PC-9 (cell line): ENCODE measurements at regions of chr2 and their contacts with region 1.

Region 1: DNA sequence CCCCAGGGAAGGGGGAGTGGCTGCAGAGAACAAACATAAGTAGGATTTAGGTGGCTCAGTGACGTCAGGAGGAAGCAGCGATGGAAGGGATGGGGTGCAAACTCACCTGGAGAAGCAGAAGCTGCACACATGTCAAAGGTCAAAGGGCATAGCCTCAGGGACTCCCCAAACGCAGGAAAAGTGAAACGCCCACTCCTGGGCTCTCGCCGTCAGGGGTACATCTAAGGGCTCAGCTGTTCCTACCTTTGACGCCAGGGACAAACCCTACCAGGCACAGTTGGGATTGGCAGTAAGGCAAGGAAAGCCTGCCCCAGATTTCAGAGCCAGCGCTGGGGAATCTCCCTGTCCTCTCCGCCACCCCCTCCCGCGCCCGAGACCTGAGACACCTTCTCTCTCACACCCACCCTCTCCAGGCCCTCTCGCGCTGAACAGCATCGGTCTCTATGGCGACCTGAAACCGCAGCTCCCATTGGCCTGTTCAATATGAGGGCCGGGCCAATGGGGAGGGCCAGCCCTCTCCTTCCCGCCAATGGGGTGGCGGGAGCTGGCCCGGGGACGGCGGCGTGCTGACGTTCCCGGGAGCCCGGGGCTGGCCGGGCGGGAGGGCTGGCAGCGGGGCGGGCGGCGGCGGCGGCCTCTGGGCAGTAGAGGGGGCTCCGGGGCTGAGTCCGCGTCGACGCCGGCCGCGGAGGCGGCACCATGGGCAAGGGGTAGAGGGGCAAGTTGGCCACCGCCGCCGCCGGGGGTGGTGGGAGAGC is at the starts of genes CCDC148 and PKP4:
- DNase-seq: peak; percentile 78 to 87
- H3K4me3 ChIP-seq: peak within 1 kb of the TSS; percentile 89
- H3K27ac ChIP-seq: peak within 1 kb of the TSS; percentile 54
- H3K4me1 ChIP-seq: peaks cover 29% of the 10 kb centered on the region
- H3K27me3 ChIP-seq: no peaks in the 10 kb centered on the region
- CTCF ChIP-seq: no peak
- total RNA-seq, gene CCDC148: 1.8 and 2.3 TPM in 2 replicates
- total RNA-seq, gene PKP4: 55.5 and 59.1 TPM in 2 replicates

Region 2: GRCh38 chr2:158024288-158024898 is 432.1 kb before region 1 on chr2:
- CTCF ChIA-PET with region 1: no interaction called
- POLR2A ChIA-PET with region 1: no interaction called
- intact Hi-C with region 1: loop called (anchors 10 kb)
- DNase-seq: peak in 1 of 2 experiments; percentile 50
- H3K4me3 ChIP-seq: no peak overlapping the region
- H3K27ac ChIP-seq: no peak overlapping the region
- H3K4me1 ChIP-seq: no peaks in the 10 kb centered on the region
- H3K27me3 ChIP-seq: no peaks in the 10 kb centered on the region
- CTCF ChIP-seq: peak; percentile 77

Region 3: DNA sequence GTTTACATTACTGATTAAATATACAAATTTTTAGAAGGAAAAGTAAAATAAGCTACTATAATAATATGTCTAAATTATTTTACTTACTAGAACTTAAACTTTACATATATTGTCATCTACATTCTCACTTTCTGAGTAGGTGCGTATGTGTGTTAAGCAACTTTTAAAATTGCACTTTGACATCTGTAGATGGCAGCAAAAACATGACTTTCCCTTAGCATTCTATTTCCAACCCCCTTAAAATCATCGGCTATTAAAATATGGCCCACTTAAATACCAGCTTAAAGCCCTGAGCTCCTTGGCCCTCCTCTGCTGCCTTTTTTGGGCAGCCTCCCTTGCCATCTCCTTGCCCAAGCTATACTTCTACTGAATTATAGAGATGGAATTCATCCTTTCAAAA is 276.8 kb before region 1 on chr2:
- CTCF ChIA-PET with region 1: interaction called, 3 read pairs
- POLR2A ChIA-PET with region 1: no interaction called
- intact Hi-C with region 1: loop called (anchors 5 kb)
- DNase-seq: no peak
- H3K4me3 ChIP-seq: no peak overlapping the region
- H3K27ac ChIP-seq: no peak overlapping the region
- H3K4me1 ChIP-seq: peaks cover 6% of the 10 kb centered on the region; the same call in 1 of the 2 replicates
- H3K27me3 ChIP-seq: no peaks in the 10 kb centered on the region
- CTCF ChIP-seq: peak; percentile 41; the same call in 1 of the 2 replicates

Region 4: DNA sequence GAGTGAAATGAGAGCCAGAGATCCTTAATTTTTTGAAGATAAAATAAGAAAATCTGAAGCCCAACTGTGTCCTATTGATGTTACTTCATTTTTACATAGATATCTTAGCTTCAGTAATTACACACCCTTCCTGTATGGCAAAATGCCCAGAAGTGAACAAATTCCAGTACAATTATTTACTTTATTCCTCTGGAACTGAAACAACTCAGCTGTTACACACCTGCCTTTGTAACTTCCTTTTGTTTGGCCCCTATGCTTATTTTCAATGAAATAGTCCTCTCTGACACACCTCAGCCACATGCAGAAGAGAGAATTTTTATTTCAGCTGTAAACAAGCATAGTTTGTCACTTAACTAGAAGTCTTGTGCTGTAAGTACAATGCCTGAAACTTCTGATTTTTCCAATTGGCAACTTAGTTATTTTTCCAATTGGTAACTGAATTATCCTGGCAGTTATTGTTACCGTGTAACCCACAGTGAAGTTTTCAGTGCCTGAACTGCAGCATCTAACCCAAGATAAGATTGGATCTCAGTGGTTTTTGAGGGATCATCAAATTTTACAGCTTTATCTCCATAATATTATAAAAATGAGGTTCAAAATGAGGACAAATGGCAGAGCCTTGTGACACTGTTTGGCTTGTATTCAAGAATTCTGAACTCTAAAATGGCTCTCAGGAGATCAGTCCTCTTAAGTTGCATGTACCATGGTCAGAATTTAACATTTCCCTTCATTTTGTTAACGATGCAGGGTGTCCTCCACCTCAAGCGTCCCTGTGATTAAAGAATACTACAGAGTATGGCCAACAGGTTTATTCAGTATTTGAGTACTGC is 82.9 kb after region 1 on chr2:
- CTCF ChIA-PET with region 1: no interaction called
- POLR2A ChIA-PET with region 1: no interaction called
- intact Hi-C with region 1: loop called (anchors 5 kb)
- DNase-seq: peak; percentile 3 to 73
- H3K4me3 ChIP-seq: no peak overlapping the region
- H3K27ac ChIP-seq: peak overlapping the region; percentile 44; the same call in 1 of the 2 replicates
- H3K4me1 ChIP-seq: peaks cover 12% of the 10 kb centered on the region
- H3K27me3 ChIP-seq: no peaks in the 10 kb centered on the region
- CTCF ChIP-seq: no peak

Region 5: GRCh38 chr2:158554948-158555347 is 98.5 kb after region 1 on chr2:
- CTCF ChIA-PET with region 1: no interaction called
- POLR2A ChIA-PET with region 1: no interaction called
- intact Hi-C with region 1: no loop called
- DNase-seq: no peak
- H3K4me3 ChIP-seq: no peak overlapping the region
- H3K27ac ChIP-seq: no peak overlapping the region
- H3K4me1 ChIP-seq: no peaks in the 10 kb centered on the region
- H3K27me3 ChIP-seq: no peaks in the 10 kb centered on the region
- CTCF ChIP-seq: no peak

Region 6: DNA sequence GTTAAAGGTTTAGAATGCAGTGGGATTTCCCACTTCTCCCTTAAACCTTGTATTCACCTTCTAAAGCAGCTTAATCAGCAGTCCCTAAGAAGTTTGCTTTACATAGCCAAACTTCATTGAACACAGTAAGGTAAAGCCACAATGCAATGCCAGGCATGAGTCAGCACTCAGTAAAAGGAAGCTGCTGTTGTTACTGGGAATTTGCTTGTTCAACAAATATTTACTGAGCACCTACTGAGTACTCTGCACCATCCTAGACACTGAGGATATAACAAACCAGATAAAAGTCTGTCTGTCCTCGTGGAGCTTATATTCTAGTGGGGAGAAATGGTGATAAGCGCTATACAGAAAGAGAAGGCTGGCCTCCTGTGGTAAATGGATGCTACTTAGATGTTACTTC is 163.0 kb after region 1 on chr2:
- CTCF ChIA-PET with region 1: interaction called, 5 read pairs
- POLR2A ChIA-PET with region 1: no interaction called
- intact Hi-C with region 1: loop called (anchors 5 kb)
- DNase-seq: peak in 1 of 2 experiments; percentile 57
- H3K4me3 ChIP-seq: no peak overlapping the region
- H3K27ac ChIP-seq: peak overlapping the region; percentile 58
- H3K4me1 ChIP-seq: peaks cover 11% of the 10 kb centered on the region
- H3K27me3 ChIP-seq: no peaks in the 10 kb centered on the region
- CTCF ChIP-seq: no peak

Region 7: DNA sequence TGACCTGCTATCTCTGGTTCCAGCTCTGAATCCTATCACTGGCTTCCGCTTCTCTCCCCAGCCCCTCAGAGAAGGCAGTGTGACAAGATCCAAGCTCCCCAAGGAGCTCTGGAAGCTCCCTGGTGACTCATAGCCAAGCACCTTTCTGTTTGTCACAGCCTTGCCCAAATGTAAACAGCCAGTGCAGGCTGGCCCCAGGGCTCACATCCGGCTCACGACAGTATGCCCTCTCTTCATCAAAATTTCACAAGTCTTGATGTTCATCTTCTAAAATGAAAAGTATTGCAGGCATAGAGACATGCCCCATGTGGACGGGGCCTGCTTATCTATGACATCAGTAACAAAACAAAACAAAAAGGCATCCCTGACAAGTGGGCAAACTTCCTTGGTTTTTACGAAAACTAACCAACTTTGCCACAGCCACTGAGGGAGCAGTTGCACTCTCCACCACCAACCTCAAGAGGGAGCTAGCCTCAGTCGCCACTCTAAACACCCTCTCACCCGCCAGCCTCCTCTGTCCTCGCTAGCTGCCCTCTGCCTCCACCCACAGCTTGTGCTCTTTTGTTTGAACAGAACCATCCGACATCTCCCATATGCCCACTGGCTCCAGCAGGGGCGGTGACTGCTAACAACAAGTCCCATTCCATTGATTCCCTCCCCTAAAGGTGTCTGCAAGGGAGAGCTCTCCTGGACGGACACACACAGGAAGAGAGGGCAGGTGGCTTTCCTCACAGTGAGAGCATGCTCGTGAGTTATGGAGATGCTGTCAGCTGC is 267.6 kb after region 1 on chr2:
- CTCF ChIA-PET with region 1: interaction called, 5 read pairs
- POLR2A ChIA-PET with region 1: no interaction called
- intact Hi-C with region 1: loop called (anchors 10 kb)
- DNase-seq: peak; percentile 71 to 95
- H3K4me3 ChIP-seq: peak overlapping the region; percentile 41; the same call in 1 of the 2 replicates
- H3K27ac ChIP-seq: peak overlapping the region; percentile 80
- H3K4me1 ChIP-seq: peaks cover 40% of the 10 kb centered on the region
- H3K27me3 ChIP-seq: no peaks in the 10 kb centered on the region
- CTCF ChIP-seq: peak; percentile 67